ENCODE measurements at regions of chr1 and their contacts with region 1.

Region 1: DNA sequence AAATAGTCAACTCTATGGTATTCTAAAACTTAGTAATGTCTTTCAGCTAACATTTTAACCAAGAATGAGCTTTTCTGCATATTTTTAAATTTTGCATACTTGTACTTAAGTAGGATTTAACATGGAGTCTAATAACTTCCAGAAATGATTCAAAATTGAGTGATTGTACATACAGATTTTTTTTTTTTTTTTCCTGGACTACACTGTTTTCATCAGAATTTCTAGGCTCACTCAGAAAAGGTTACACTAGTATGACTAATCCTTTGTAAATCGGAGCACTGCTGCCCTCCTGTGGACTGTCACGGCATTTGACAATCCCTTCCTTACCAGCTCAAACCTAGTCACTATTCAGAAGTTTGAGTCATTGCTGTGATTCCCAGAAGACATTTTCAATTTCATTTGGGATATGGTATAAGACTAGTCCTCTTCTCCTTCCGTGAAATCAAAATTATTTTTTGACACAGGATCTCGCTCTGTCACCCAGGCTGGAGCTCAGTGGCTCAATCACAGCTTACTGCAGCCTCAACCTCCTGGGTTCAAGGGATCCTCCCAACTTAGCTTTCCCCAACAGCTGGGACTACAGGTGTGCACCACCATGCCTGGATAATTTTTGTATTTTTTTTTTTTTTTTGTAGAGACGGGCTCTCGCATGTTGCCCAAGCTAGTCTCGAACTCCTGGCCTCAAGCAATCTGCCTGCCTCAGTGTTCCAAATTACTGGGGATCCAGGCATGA is 45.5 kb downstream of the CD46 start:
- DNase-seq: peak; percentile 55 to 86 (median 77)
- ATAC-seq: peak; percentile 94
- H3K4me3 ChIP-seq: no peak overlapping the region
- H3K4me3 Mint-ChIP-seq: no peak overlapping the region
- H3K27ac ChIP-seq: no peak overlapping the region
- H3K27ac Mint-ChIP-seq: no peak overlapping the region
- H3K4me1 ChIP-seq: peaks cover 29% of the 10 kb centered on the region
- H3K4me1 Mint-ChIP-seq: peaks cover 45% of the 10 kb centered on the region
- H3K27me3 ChIP-seq: no peaks in the 10 kb centered on the region
- H3K27me3 Mint-ChIP-seq: no peaks in the 10 kb centered on the region
- CTCF ChIP-seq: peak; percentile 96

Region 2: GRCh38 chr1:206878456-206878855 is 918.9 kb before region 1 on chr1:
- CTCF ChIA-PET with region 1: no interaction called
- POLR2A ChIA-PET with region 1: no interaction called
- intact Hi-C with region 1: no loop called
- DNase-seq: no peak
- ATAC-seq: no peak
- H3K4me3 ChIP-seq: no peak overlapping the region
- H3K4me3 Mint-ChIP-seq: no peak overlapping the region
- H3K27ac ChIP-seq: no peak overlapping the region
- H3K27ac Mint-ChIP-seq: no peak overlapping the region
- H3K4me1 ChIP-seq: no peaks in the 10 kb centered on the region
- H3K4me1 Mint-ChIP-seq: no peaks in the 10 kb centered on the region
- H3K27me3 ChIP-seq: no peaks in the 10 kb centered on the region
- H3K27me3 Mint-ChIP-seq: no peaks in the 10 kb centered on the region
- CTCF ChIP-seq: no peak

Region 3: DNA sequence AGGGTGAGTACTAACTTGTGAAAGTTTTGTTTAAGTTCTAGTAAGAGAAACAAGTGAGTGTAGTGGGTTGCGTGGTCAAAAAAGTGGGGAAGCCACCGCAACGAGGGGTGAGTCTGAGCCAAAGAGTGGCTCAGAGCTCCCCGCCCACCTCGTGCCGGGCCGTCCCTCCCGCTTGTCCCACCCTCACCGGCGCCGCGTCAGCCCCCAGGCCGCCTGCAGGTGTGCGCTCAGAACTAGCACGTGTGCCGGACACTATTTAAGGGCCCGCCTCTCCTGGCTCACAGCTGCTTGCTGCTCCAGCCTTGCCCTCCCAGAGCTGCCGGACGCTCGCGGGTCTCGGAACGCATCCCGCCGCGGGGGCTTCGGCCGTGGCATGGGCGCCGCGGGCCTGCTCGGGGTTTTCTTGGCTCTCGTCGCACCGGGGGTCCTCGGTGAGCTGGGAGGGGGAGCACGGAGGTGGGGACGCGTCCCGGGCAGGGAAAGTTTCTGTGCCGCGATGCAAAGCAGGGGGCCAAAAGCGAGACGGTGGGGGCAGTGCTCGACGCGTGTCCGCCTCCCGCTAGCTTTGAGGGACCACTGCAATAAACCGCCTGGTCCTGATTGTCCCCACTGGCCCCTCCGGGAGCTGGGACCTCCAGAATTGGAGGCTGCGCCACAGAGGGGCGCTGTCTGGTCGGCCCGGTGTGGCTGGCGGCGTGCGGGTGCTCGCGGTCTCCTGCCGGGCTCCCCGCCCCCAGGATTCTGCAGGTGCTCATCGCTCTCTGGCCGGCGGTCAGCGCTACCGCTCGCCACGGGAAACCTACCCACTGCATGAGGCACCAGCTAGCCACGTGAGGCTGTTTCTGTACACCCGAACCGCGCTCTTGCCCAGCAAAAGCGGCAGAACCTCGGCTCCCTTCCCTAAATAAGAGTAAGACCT is 343.1 kb before region 1 on chr1 and contains the start of gene CR2:
- CTCF ChIA-PET with region 1: no interaction called
- POLR2A ChIA-PET with region 1: no interaction called
- intact Hi-C with region 1: no loop called
- DNase-seq: peak in 8 of 9 experiments; percentile 1 to 73 (median 58)
- ATAC-seq: peak; percentile 72
- H3K4me3 ChIP-seq: peak within 1 kb of the TSS; percentile 49 to 59
- H3K4me3 Mint-ChIP-seq: peak within 1 kb of the TSS; percentile 77
- H3K27ac ChIP-seq: peak within 1 kb of the TSS in 1 of 2 experiments; percentile 7
- H3K27ac Mint-ChIP-seq: peak within 1 kb of the TSS; percentile 64
- H3K4me1 ChIP-seq: peaks cover 38% of the 10 kb centered on the region
- H3K4me1 Mint-ChIP-seq: peaks cover 14% of the 10 kb centered on the region
- H3K27me3 ChIP-seq: peaks cover 0 to 5% of the 10 kb centered on the region in 2 experiments
- H3K27me3 Mint-ChIP-seq: peaks cover 13% of the 10 kb centered on the region
- CTCF ChIP-seq: peak; percentile 60
- total RNA-seq, gene CR2: 5.2 to 5.7 TPM

Region 4: DNA sequence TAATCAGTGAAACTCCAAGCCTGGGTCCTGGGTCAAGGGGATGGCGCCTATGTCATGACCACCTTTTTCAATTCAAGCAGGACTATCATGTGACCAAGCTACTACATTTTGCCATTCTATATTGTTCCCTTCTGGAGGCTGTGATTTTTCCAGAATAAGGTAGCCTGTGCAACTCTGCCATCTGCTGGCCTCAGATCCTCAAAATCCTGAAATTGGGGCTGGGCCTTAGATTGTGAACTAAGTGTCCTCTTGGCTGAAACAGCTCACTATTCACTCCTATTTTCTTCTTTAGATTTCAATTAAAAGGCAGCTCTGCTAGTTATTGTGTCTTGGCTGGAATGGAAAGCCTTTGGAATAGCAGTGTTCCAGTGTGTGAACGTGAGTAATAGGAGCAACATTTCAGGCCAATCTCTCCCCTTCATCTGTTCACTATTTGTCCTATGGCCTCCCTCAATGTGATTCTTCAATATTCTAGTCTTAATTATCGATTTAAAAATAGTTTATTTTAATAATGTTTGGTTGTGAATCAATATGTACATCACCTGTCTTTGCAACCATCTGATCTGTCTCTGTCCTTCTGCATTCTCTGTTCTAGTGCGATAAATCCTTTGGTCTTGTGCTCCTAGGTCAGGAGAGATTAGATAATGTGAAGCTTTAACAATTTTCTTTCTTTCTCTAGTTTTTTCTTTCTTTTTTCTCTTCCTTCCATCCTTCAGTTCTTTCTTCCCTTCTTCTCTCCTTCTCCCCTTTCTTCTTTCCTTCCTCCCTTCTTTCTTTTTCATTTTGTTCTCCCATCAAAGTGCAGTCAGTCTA is 231.6 kb before region 1 on chr1:
- CTCF ChIA-PET with region 1: no interaction called
- POLR2A ChIA-PET with region 1: no interaction called
- intact Hi-C with region 1: no loop called
- DNase-seq: peak in 1 of 9 experiments; percentile 2
- ATAC-seq: no peak
- H3K4me3 ChIP-seq: no peak overlapping the region
- H3K4me3 Mint-ChIP-seq: no peak overlapping the region
- H3K27ac ChIP-seq: no peak overlapping the region
- H3K27ac Mint-ChIP-seq: no peak overlapping the region
- H3K4me1 ChIP-seq: no peaks in the 10 kb centered on the region
- H3K4me1 Mint-ChIP-seq: no peaks in the 10 kb centered on the region
- H3K27me3 ChIP-seq: no peaks in the 10 kb centered on the region
- H3K27me3 Mint-ChIP-seq: no peaks in the 10 kb centered on the region
- CTCF ChIP-seq: no peak

Region 5: GRCh38 chr1:207619871-207620542 is 177.4 kb before region 1 on chr1:
- CTCF ChIA-PET with region 1: interaction called, 11 read pairs
- POLR2A ChIA-PET with region 1: no interaction called
- intact Hi-C with region 1: no loop called
- DNase-seq: peak in 2 of 9 experiments; percentile 39 to 53
- ATAC-seq: peak; percentile 96
- H3K4me3 ChIP-seq: no peak overlapping the region
- H3K4me3 Mint-ChIP-seq: no peak overlapping the region
- H3K27ac ChIP-seq: no peak overlapping the region
- H3K27ac Mint-ChIP-seq: no peak overlapping the region
- H3K4me1 ChIP-seq: no peaks in the 10 kb centered on the region
- H3K4me1 Mint-ChIP-seq: peaks cover 4% of the 10 kb centered on the region
- H3K27me3 ChIP-seq: no peaks in the 10 kb centered on the region
- H3K27me3 Mint-ChIP-seq: no peaks in the 10 kb centered on the region
- CTCF ChIP-seq: peak; percentile 82

Region 6: DNA sequence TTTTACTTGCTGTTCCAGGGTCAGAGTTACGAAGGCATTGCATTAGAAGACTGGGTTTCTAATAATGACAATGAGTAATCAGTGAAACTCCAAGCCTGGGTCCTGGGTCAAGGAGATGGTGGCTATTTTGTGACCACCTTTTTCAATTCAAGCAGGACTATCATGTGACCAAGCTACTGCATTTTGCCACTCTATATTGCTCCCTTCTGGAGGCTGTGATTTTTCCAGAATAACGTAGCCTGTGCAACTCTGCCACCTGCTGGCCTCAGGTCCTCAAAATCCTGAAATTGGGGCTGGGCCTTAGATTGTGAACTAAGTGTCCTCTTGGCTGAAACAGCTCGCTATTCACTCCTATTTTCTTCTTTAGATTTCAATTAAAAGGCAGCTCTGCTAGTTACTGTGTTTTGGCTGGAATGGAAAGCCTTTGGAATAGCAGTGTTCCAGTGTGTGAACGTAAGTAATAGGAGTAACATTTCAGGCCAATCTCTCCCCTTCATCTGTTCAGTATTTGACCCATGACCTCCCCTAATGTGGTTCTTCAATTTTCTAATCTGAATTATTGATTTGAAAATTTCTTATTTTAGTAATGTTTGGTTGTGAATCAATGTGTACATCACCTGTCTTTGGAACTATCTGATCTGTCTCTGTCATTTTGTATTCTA is 98.4 kb before region 1 on chr1:
- CTCF ChIA-PET with region 1: interaction called, 6 read pairs
- POLR2A ChIA-PET with region 1: interaction called, 6 read pairs
- intact Hi-C with region 1: loop called in 1 of 2 experiments (anchors 5 kb)
- DNase-seq: peak in 8 of 9 experiments; percentile 4 to 62 (median 30)
- ATAC-seq: peak; percentile 51
- H3K4me3 ChIP-seq: no peak overlapping the region
- H3K4me3 Mint-ChIP-seq: no peak overlapping the region
- H3K27ac ChIP-seq: no peak overlapping the region
- H3K27ac Mint-ChIP-seq: no peak overlapping the region
- H3K4me1 ChIP-seq: no peaks in the 10 kb centered on the region
- H3K4me1 Mint-ChIP-seq: no peaks in the 10 kb centered on the region
- H3K27me3 ChIP-seq: no peaks in the 10 kb centered on the region
- H3K27me3 Mint-ChIP-seq: peaks cover 5% of the 10 kb centered on the region
- CTCF ChIP-seq: peak; percentile 39

Region 7: DNA sequence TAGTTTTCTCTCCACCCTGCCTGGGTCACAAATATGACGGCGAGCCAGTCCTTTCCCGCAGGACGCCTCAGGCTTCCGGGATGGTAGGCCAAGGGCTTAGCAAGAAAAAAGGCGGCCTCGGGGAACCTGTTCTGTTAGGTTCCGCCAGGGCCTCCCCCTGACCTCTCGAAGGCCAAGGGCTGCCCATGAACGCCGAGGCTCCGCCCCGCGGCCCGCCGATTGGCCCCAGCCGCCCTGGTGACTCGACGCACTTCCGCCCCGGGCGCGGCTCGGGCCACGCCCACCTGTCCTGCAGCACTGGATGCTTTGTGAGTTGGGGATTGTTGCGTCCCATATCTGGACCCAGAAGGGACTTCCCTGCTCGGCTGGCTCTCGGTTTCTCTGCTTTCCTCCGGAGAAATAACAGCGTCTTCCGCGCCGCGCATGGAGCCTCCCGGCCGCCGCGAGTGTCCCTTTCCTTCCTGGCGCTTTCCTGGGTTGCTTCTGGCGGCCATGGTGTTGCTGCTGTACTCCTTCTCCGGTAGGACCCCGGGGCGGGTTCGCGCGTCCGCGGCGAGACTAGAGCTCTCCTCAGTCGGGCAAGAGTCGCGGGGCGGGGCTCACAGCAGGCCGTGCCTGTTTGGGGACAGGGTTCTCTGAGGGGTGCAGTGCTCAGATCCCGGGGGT is 45.5 kb before region 1 on chr1 and contains the start of gene CD46:
- CTCF ChIA-PET with region 1: interaction called, 15 read pairs
- POLR2A ChIA-PET with region 1: interaction called, 3 read pairs
- intact Hi-C with region 1: loop called in 1 of 2 experiments (anchors 2 kb)
- DNase-seq: peak; percentile 85 to 97 (median 94)
- ATAC-seq: peak; percentile 95
- H3K4me3 ChIP-seq: peak within 1 kb of the TSS; percentile 76 to 91
- H3K4me3 Mint-ChIP-seq: peak within 1 kb of the TSS; percentile 100
- H3K27ac ChIP-seq: peak within 1 kb of the TSS; percentile 58 to 90
- H3K27ac Mint-ChIP-seq: peak within 1 kb of the TSS; percentile 97
- H3K4me1 ChIP-seq: peaks cover 51% of the 10 kb centered on the region
- H3K4me1 Mint-ChIP-seq: peaks cover 81% of the 10 kb centered on the region
- H3K27me3 ChIP-seq: no peaks in the 10 kb centered on the region
- H3K27me3 Mint-ChIP-seq: no peaks in the 10 kb centered on the region
- CTCF ChIP-seq: no peak
- total RNA-seq, gene CD46: 108 to 109 TPM

Region 8: GRCh38 chr1:207811920-207812720 is 14.7 kb after region 1 on chr1:
- CTCF ChIA-PET with region 1: interaction called, 29 read pairs
- POLR2A ChIA-PET with region 1: interaction called, 6 read pairs
- intact Hi-C with region 1: no loop called
- DNase-seq: peak in 2 of 9 experiments; percentile 9 to 46
- ATAC-seq: no peak
- H3K4me3 ChIP-seq: no peak overlapping the region
- H3K4me3 Mint-ChIP-seq: no peak overlapping the region
- H3K27ac ChIP-seq: no peak overlapping the region
- H3K27ac Mint-ChIP-seq: peak overlapping the region; percentile 69
- H3K4me1 ChIP-seq: peaks cover 41% of the 10 kb centered on the region
- H3K4me1 Mint-ChIP-seq: peaks cover 76% of the 10 kb centered on the region
- H3K27me3 ChIP-seq: no peaks in the 10 kb centered on the region
- H3K27me3 Mint-ChIP-seq: no peaks in the 10 kb centered on the region
- CTCF ChIP-seq: no peak

Region 9: GRCh38 chr1:207828485-207829158 is 31.2 kb after region 1 on chr1:
- CTCF ChIA-PET with region 1: interaction called, 24 read pairs
- POLR2A ChIA-PET with region 1: interaction called, 9 read pairs
- intact Hi-C with region 1: loop called in 1 of 2 experiments (anchors 2 kb)
- DNase-seq: peak in 8 of 9 experiments; percentile 35 to 83 (median 64)
- ATAC-seq: peak; percentile 19
- H3K4me3 ChIP-seq: no peak overlapping the region
- H3K4me3 Mint-ChIP-seq: no peak overlapping the region
- H3K27ac ChIP-seq: peak overlapping the region in 1 of 2 experiments; percentile 29
- H3K27ac Mint-ChIP-seq: peak overlapping the region; percentile 47
- H3K4me1 ChIP-seq: peaks cover 76% of the 10 kb centered on the region
- H3K4me1 Mint-ChIP-seq: peaks cover 94% of the 10 kb centered on the region
- H3K27me3 ChIP-seq: no peaks in the 10 kb centered on the region
- H3K27me3 Mint-ChIP-seq: no peaks in the 10 kb centered on the region
- CTCF ChIP-seq: peak; percentile 78

Region 10: GRCh38 chr1:207885129-207886032 is 88.0 kb after region 1 on chr1:
- CTCF ChIA-PET with region 1: interaction called, 14 read pairs
- POLR2A ChIA-PET with region 1: no interaction called
- intact Hi-C with region 1: no loop called
- DNase-seq: peak; percentile 43 to 87 (median 68)
- ATAC-seq: peak; percentile 74
- H3K4me3 ChIP-seq: no peak overlapping the region
- H3K4me3 Mint-ChIP-seq: peak overlapping the region; percentile 20
- H3K27ac ChIP-seq: no peak overlapping the region
- H3K27ac Mint-ChIP-seq: peak overlapping the region; percentile 96
- H3K4me1 ChIP-seq: peaks cover 26% of the 10 kb centered on the region
- H3K4me1 Mint-ChIP-seq: peaks cover 37% of the 10 kb centered on the region
- H3K27me3 ChIP-seq: no peaks in the 10 kb centered on the region
- H3K27me3 Mint-ChIP-seq: peaks cover 3% of the 10 kb centered on the region
- CTCF ChIP-seq: peak; percentile 86

Measured in CD8-positive, alpha-beta T cell (primary cell).